Activated CD4-positive, alpha-beta memory T cell treated with anti-CD3 and anti-CD28 coated beads, Interleukin-2, amount 10 ng/mL, durations not matched to agents 7 days and 5 days (primary cell): ENCODE measurements at regions of chr17 and their contacts with region 1.

Region 1: GRCh38 chr17:34361478-34362061 is 1.5 kb downstream of the CCL1 start:
- DNase-seq: peak; percentile 80
- H3K4me3 Mint-ChIP-seq: no peak overlapping the region
- H3K27ac Mint-ChIP-seq: no peak overlapping the region
- H3K4me1 Mint-ChIP-seq: peaks cover 33% of the 10 kb centered on the region
- H3K27me3 Mint-ChIP-seq: peaks cover 52% of the 10 kb centered on the region

Region 2: GRCh38 chr17:34199932-34200534 is 161.5 kb before region 1 on chr17:
- CTCF ChIA-PET with region 1: interaction called, 199 read pairs
- POLR2A ChIA-PET with region 1: interaction called, 15 read pairs
- DNase-seq: peak; percentile 73
- H3K4me3 Mint-ChIP-seq: no peak overlapping the region
- H3K27ac Mint-ChIP-seq: no peak overlapping the region
- H3K4me1 Mint-ChIP-seq: peaks cover 18% of the 10 kb centered on the region
- H3K27me3 Mint-ChIP-seq: peaks cover 54% of the 10 kb centered on the region

Region 3: GRCh38 chr17:34347063-34347462 is 14.5 kb before region 1 on chr17:
- CTCF ChIA-PET with region 1: interaction called, 11 read pairs
- POLR2A ChIA-PET with region 1: no interaction called
- DNase-seq: no peak
- H3K4me3 Mint-ChIP-seq: no peak overlapping the region
- H3K27ac Mint-ChIP-seq: no peak overlapping the region
- H3K4me1 Mint-ChIP-seq: no peaks in the 10 kb centered on the region
- H3K27me3 Mint-ChIP-seq: peaks cover 47% of the 10 kb centered on the region

Region 4: DNA sequence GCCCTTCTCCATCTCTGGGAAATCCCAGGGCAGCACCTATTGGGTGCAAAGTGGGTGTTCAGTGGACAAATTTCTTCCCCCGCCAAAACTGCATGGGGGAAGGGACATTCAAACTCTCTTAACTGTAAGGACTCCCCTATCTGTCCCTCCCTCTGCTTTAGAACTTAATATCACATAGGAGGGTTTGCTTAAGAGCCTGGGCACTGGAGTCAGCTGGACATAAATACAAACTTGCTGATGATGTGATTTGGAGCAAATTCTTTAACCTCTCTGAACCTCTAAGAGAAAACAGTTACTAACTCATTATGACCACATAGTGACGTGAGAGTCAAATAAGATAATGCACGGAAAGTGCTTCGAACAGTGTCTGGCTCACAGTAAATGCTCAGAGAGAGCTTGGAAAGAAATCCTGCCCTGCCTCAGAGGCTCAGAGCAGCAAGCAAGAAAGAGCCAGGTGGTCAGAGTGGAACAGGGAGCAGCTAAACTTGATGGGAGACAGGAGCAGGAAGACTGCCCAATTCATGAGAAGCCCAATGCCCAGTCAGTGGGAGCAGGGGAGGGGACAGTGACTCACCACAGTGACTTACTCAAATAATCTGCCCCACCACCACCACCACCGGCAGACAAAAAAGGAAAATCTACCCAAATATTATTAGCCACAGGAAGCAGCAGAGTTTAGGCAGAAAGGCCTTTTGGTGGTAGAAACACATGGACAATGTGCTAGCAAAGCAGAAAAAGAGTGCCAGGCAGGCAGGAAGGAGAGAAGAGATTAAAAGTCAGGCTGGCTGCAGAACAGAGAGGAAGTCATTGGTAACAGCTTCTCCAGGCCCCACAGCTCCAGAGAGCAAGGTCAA is 25.4 kb after region 1 on chr17:
- CTCF ChIA-PET with region 1: interaction called, 64 read pairs
- POLR2A ChIA-PET with region 1: no interaction called
- DNase-seq: peak; percentile 32
- H3K4me3 Mint-ChIP-seq: no peak overlapping the region
- H3K27ac Mint-ChIP-seq: peak overlapping the region; percentile 69
- H3K4me1 Mint-ChIP-seq: peaks cover 83% of the 10 kb centered on the region
- H3K27me3 Mint-ChIP-seq: peaks cover 10% of the 10 kb centered on the region